ENCODE measurements at regions of chr17 and their contacts with region 1.

Region 1: GRCh38 chr17:80101011-80101945 is at the start of gene GAA:
- DNase-seq: peak; percentile 94
- total RNA-seq, gene GAA: 47.0 TPM

Region 2: GRCh38 chr17:80187515-80187941 is 86.2 kb after region 1 on chr17:
- intact Hi-C with region 1: no loop called
- DNase-seq: no peak

Region 3: GRCh38 chr17:80263253-80264204 is 162.3 kb after region 1 on chr17:
- intact Hi-C with region 1: loop called (anchors 5 kb)
- DNase-seq: peak; percentile 93